ENCODE measurements at regions of chr12 and their contacts with region 1.

Region 1: DNA sequence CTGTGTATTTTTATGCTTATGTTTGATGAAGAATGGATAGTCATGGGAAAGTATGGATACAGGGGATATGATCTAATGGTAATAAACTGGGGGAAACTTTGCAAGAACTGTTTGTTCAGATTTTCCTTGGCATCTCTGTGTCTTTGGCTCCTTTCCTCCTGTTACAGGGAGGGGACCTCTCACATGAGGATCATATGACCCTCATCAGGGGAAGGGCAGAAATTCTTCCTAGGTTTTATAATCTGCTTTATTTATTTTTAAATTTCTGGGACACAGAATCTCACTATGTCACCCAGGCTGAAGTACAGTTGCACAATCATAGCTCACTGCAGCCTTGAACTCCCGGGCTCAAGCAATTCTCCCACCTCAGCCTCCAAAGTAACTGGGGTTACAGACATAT is 526.5 kb downstream of the CCER1 start:
- DNase-seq: no peak
- H3K4me3 Mint-ChIP-seq: no peak overlapping the region
- H3K27ac Mint-ChIP-seq: no peak overlapping the region
- H3K4me1 Mint-ChIP-seq: no peaks in the 10 kb centered on the region
- H3K27me3 Mint-ChIP-seq: no peaks in the 10 kb centered on the region
- CTCF ChIP-seq: no peak

Region 2: DNA sequence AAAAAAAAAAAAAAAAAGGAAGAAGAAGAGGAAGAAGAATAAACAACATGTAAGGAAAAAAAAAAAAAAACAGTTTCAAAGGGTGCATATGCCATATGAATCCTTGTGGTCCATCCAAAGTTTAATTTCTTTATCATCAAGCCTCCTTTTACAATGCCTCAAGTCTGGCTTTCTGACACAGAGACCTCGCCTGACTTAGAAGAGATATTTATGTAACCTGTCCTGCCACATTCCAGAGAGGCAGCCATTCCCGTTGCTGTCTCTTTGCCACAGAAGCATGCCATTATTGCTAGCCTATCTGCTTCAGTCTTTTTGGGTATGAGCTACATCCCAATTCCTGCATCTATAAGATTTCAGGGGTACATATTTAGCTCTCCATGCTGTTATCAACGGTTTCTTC is 123.1 kb before region 1 on chr12:
- CTCF ChIA-PET with region 1: no interaction called
- intact Hi-C with region 1: no loop called
- DNase-seq: peak; percentile 19
- H3K4me3 Mint-ChIP-seq: no peak overlapping the region
- H3K27ac Mint-ChIP-seq: no peak overlapping the region
- H3K4me1 Mint-ChIP-seq: no peaks in the 10 kb centered on the region
- H3K27me3 Mint-ChIP-seq: no peaks in the 10 kb centered on the region
- CTCF ChIP-seq: no peak

Region 3: DNA sequence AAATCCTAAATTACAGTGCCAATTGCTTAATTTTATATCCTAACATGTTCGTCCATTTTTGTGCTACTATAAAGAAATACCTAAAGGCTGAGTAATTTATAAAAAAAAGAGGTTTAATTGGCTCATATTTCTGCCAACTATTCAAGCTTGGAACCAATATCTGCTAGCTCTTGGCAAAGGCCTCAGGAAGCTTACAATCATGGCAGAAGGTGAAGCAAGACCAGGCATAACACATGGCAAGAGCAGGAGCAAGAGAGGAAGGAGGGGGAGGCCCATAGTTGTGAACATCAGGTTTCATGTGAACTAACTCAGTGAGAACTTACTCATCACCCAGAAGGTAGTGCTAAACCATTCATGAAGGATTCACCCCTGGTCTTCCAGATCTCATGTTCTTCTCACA is 32.2 kb after region 1 on chr12:
- CTCF ChIA-PET with region 1: no interaction called
- intact Hi-C with region 1: loop called (anchors 1 kb)
- DNase-seq: no peak
- H3K4me3 Mint-ChIP-seq: no peak overlapping the region
- H3K27ac Mint-ChIP-seq: no peak overlapping the region
- H3K4me1 Mint-ChIP-seq: no peaks in the 10 kb centered on the region
- H3K27me3 Mint-ChIP-seq: no peaks in the 10 kb centered on the region
- CTCF ChIP-seq: no peak